Ovary (tissue), 10 donors: ENCODE measurements at regions of chr4 and their contacts with region 1.

Region 1: DNA sequence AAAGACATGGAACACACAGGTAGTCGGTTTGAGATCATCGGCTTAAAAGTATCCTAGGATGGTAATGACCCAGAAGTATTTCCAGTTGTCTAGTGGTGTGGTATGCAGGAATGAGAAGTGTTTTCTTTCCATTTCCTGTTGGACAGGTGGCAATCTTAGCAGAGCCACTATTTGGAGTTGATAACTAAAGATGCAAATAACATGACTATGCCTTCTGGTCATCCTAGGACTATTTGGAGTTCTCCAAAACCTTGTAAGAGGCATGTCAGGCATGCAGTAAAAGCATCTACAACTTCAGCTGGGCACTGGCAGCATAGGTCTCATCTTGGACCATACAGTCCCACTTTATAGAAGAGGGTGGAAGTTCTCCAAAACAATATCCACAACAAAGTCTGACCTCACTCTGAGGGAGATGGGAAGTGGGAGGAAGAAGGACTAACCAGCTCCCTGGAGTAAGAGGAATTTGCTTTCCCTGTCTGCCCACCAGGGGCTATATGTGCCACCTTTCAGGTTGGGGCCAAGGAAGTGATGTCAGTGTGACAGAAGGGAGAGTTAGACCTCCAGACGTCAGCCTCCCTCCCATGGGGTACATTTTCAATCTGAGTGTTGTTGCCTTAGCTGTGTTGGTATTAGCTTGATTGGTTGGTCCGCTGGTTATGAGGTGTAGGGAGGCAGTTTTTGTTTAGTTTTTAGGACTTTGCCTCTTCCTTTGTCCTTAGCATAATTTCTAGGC is 101.2 kb upstream of the MYOZ2 start:
- DNase-seq: no peak
- H3K4me3 ChIP-seq: no peak overlapping the region
- H3K27ac ChIP-seq: no peak overlapping the region
- H3K4me1 ChIP-seq: peaks cover 30% of the 10 kb centered on the region
- H3K27me3 ChIP-seq: no peaks in the 10 kb centered on the region
- CTCF ChIP-seq: no peak
- EP300 ChIP-seq: no peak
- POLR2A ChIP-seq: no peak

Region 2: GRCh38 chr4:118989098-118990080 is 45.1 kb before region 1 on chr4:
- intact Hi-C with region 1: loop called in 3 of 4 experiments (anchors 5 to 10 kb)
- DNase-seq: no peak
- H3K4me3 ChIP-seq: no peak overlapping the region
- H3K27ac ChIP-seq: no peak overlapping the region
- H3K4me1 ChIP-seq: peaks cover 18% of the 10 kb centered on the region
- H3K27me3 ChIP-seq: no peaks in the 10 kb centered on the region
- CTCF ChIP-seq: no peak
- EP300 ChIP-seq: no peak
- POLR2A ChIP-seq: no peak

Region 3: DNA sequence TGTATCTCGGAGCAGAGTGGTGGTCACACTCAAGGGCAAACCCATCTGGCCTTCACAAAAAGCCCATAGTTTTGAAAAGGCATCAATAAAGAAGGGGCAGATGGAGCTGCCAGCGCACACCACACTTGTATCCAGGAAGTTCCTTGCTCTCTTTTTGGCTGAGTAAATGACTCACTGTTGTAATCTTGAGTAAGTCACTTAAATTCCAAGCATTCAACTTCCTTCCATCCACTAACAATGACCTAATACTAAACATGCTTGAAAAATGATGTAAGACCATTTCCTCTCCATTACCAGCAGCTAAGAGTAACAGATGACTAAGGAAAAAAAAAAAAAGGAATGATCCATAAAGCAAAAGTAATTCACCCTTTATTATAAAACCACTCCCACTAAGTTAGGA is 68.8 kb after region 1 on chr4:
- intact Hi-C with region 1: no loop called
- DNase-seq: no peak
- H3K4me3 ChIP-seq: no peak overlapping the region
- H3K27ac ChIP-seq: no peak overlapping the region
- H3K4me1 ChIP-seq: no peaks in the 10 kb centered on the region
- H3K27me3 ChIP-seq: no peaks in the 10 kb centered on the region
- CTCF ChIP-seq: no peak
- EP300 ChIP-seq: no peak
- POLR2A ChIP-seq: no peak